Esophagus muscularis mucosa (tissue), 4 donors: ENCODE measurements at regions of chrX and their contacts with region 1.

Region 1: GRCh38 chrX:37825209-37825842 is 22.0 kb downstream of the DYNLT3 start:
- DNase-seq: no peak
- H3K4me3 ChIP-seq: no peak overlapping the region
- H3K27ac ChIP-seq: no peak overlapping the region
- H3K4me1 ChIP-seq: no peaks in the 10 kb centered on the region
- H3K27me3 ChIP-seq: no peaks in the 10 kb centered on the region
- CTCF ChIP-seq: peak; percentile 82 to 87 (median 86)
- EP300 ChIP-seq: no peak
- POLR2A ChIP-seq: no peak

Region 2: GRCh38 chrX:37509349-37509748 is 316.0 kb before region 1 on chrX:
- intact Hi-C with region 1: loop called (anchors 5 kb)
- DNase-seq: no peak
- H3K4me3 ChIP-seq: no peak overlapping the region
- H3K27ac ChIP-seq: no peak overlapping the region
- H3K4me1 ChIP-seq: no peaks in the 10 kb centered on the region
- H3K27me3 ChIP-seq: no peaks in the 10 kb centered on the region
- CTCF ChIP-seq: peak in 2 of 3 experiments; percentile 27 to 38
- EP300 ChIP-seq: no peak
- POLR2A ChIP-seq: no peak

Region 3: DNA sequence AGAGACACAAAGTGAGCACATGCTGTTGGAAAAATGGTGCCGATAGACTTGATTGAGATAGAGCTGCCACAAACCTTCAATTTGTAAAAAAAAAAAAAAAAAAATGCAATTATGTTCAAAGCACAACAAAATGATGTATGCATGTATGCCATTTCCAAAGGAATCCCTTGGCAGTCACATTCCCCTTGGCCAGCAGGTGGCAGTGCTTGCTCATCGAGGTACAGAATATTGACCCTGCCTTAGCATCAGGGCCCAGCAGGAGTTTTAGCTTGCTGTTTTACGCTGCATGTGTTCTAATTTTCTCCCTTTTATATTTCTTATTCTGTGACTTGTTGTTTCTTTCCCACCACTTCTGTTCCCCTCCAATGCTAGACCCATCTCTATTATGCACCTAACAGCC is 80.0 kb before region 1 on chrX:
- intact Hi-C with region 1: loop called (anchors 5 kb)
- DNase-seq: no peak
- H3K4me3 ChIP-seq: no peak overlapping the region
- H3K27ac ChIP-seq: no peak overlapping the region
- H3K4me1 ChIP-seq: no peaks in the 10 kb centered on the region
- H3K27me3 ChIP-seq: no peaks in the 10 kb centered on the region
- CTCF ChIP-seq: peak; percentile 65 to 72 (median 71)
- EP300 ChIP-seq: no peak
- POLR2A ChIP-seq: no peak

Region 4: GRCh38 chrX:37958525-37959211 is 133.3 kb after region 1 on chrX:
- intact Hi-C with region 1: no loop called
- DNase-seq: no peak
- H3K4me3 ChIP-seq: no peak overlapping the region
- H3K27ac ChIP-seq: no peak overlapping the region
- H3K4me1 ChIP-seq: no peaks in the 10 kb centered on the region
- H3K27me3 ChIP-seq: no peaks in the 10 kb centered on the region
- CTCF ChIP-seq: no peak
- EP300 ChIP-seq: no peak
- POLR2A ChIP-seq: no peak

Region 5: GRCh38 chrX:38717871-38718270 is 892.5 kb after region 1 on chrX:
- intact Hi-C with region 1: no loop called
- DNase-seq: no peak
- H3K4me3 ChIP-seq: no peak overlapping the region
- H3K27ac ChIP-seq: no peak overlapping the region
- H3K4me1 ChIP-seq: no peaks in the 10 kb centered on the region
- H3K27me3 ChIP-seq: no peaks in the 10 kb centered on the region
- CTCF ChIP-seq: peak in 2 of 3 experiments; percentile 15 to 30
- EP300 ChIP-seq: no peak
- POLR2A ChIP-seq: no peak